Activated CD4-positive, alpha-beta T cell treated with anti-CD3 and anti-CD28 coated beads for 36 hours (primary cell): ENCODE measurements at regions of chr1 and their contacts with region 1.

Region 1: GRCh38 chr1:226121587-226122400 is 59.3 kb downstream of the H3-3A start:
- DNase-seq: peak; percentile 86
- ATAC-seq: peak; percentile 79
- H3K4me3 Mint-ChIP-seq: peak overlapping the region; percentile 68
- H3K27ac Mint-ChIP-seq: peak overlapping the region; percentile 60
- H3K4me1 Mint-ChIP-seq: peaks cover 20% of the 10 kb centered on the region
- H3K27me3 Mint-ChIP-seq: no peaks in the 10 kb centered on the region

Region 2: GRCh38 chr1:225962440-225962975 is 159.3 kb before region 1 on chr1:
- CTCF ChIA-PET with region 1: interaction called, 3 read pairs
- POLR2A ChIA-PET with region 1: no interaction called
- intact Hi-C with region 1: loop called in 1 of 2 experiments (anchors 1 kb)
- DNase-seq: peak; percentile 84
- ATAC-seq: peak; percentile 86
- H3K4me3 Mint-ChIP-seq: no peak overlapping the region
- H3K27ac Mint-ChIP-seq: no peak overlapping the region
- H3K4me1 Mint-ChIP-seq: peaks cover 2% of the 10 kb centered on the region
- H3K27me3 Mint-ChIP-seq: peaks cover 2% of the 10 kb centered on the region

Region 3: DNA sequence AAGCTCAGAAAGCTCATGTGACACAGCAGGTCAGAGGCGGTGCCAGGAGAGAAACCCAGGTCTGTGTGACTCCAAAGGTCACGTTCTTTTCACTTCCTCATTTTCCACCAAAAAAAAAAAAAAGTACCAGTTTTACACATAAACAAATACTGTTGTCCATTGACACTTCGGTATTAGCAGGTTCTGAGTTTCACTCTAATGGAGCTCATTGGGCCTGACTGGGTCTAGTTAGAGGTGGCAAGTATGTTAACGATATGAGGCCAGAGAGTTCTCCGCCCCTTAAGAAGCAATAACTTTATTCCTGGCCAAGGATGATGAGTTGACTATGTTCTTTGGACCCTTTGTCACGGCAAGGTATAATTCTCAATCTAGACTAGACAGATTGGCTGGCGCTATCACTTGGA is 92.7 kb before region 1 on chr1:
- CTCF ChIA-PET with region 1: no interaction called
- POLR2A ChIA-PET with region 1: no interaction called
- intact Hi-C with region 1: no loop called
- DNase-seq: no peak
- ATAC-seq: no peak
- H3K4me3 Mint-ChIP-seq: no peak overlapping the region
- H3K27ac Mint-ChIP-seq: no peak overlapping the region
- H3K4me1 Mint-ChIP-seq: no peaks in the 10 kb centered on the region
- H3K27me3 Mint-ChIP-seq: no peaks in the 10 kb centered on the region

Region 4: DNA sequence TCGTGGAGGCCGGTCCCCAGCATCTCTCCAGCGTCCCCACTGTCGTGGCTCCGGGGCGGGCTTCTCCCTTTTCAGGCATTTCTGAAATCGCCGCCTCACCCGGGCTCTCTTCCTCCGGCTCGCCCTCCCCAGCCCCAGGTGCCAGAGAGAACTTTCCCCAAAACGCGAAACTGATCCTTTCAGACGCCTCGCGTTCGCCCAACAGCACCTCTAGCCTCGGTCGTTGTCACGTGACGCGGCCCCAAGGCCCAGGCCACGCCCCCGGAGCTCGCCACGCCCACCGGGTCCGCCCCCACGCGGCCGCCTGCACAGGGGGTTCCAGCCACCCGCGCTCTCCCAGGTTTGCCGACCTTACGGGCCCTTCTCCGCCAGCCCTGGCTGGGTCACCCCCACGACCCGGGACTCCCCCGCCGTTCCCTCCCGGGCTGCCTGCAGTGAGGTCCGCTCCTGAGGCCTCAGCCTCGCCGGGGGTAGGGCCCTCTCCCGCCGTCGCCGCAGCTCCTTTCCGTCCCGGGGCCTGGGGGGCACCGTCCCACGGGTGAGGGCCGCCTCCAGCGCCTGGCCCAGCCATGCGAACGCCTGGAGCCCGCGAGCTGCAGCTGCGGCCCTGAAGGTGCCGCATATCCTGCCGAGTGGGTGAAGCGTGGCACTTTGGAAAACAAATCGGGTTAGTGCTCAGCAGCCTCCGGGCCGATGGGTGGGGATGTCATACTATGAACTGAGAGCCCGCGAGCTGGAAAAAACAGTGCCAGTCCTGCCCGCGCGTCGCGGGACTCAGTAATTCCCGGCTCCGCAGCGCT is 38.3 kb before region 1 on chr1:
- CTCF ChIA-PET with region 1: interaction called, 5 read pairs
- POLR2A ChIA-PET with region 1: interaction called, 3 read pairs
- intact Hi-C with region 1: loop called (anchors 1 to 5 kb)
- DNase-seq: peak; percentile 94
- ATAC-seq: peak; percentile 92
- H3K4me3 Mint-ChIP-seq: peak overlapping the region; percentile 75
- H3K27ac Mint-ChIP-seq: peak overlapping the region; percentile 65
- H3K4me1 Mint-ChIP-seq: peaks cover 9% of the 10 kb centered on the region
- H3K27me3 Mint-ChIP-seq: no peaks in the 10 kb centered on the region

Region 5: GRCh38 chr1:226186124-226187018 is 64.6 kb after region 1 on chr1 and contains the start of gene ACBD3:
- CTCF ChIA-PET with region 1: interaction called, 29 read pairs
- POLR2A ChIA-PET with region 1: no interaction called
- intact Hi-C with region 1: loop called (anchors 1 to 5 kb)
- DNase-seq: peak; percentile 91
- ATAC-seq: peak; percentile 97
- H3K4me3 Mint-ChIP-seq: peak within 1 kb of the TSS; percentile 91
- H3K27ac Mint-ChIP-seq: peak within 1 kb of the TSS; percentile 92
- H3K4me1 Mint-ChIP-seq: peaks cover 36% of the 10 kb centered on the region
- H3K27me3 Mint-ChIP-seq: no peaks in the 10 kb centered on the region
- total RNA-seq, gene ACBD3: 17.0 to 20.2 TPM

Region 6: DNA sequence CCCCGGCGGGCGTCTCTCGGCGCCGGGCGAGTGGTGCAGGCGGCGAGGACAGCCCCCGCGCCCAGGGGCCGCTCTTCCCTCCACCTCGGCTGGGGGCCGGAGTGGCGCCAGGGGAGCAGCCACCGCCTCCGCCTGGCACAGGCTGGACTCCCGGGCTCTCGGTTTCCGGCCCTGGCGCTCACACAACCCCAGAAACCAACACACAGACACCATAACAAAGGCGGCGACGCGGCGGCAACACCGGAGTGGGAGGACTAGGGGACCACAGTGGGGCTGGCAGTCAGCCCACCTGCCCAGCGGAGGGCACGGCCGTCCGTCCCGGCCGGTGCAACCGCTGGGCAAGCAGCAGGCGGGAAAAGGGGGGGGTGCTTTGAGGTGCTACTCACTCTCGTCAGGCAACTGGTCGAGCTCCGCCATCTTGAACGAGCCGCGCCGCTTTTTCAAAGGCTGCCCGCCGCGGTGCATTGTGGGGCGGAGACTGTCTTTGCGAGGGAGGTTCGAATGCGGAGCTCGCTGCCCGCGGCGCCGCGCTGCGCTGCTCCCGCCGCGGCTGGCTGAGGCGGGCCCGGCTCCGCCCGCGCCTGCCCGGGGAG is 187.0 kb after region 1 on chr1 and contains the start of gene LIN9:
- CTCF ChIA-PET with region 1: interaction called, 9 read pairs
- POLR2A ChIA-PET with region 1: no interaction called
- intact Hi-C with region 1: loop called in 1 of 2 experiments (anchors 1 kb)
- DNase-seq: peak; percentile 97
- ATAC-seq: peak; percentile 87
- H3K4me3 Mint-ChIP-seq: peak within 1 kb of the TSS; percentile 83
- H3K27ac Mint-ChIP-seq: peak within 1 kb of the TSS; percentile 86
- H3K4me1 Mint-ChIP-seq: peaks cover 15% of the 10 kb centered on the region
- H3K27me3 Mint-ChIP-seq: peaks cover 10% of the 10 kb centered on the region
- total RNA-seq, gene LIN9: 10.6 TPM

Region 7: GRCh38 chr1:226736908-226737818 is 615.4 kb after region 1 on chr1:
- CTCF ChIA-PET with region 1: no interaction called
- POLR2A ChIA-PET with region 1: no interaction called
- intact Hi-C with region 1: loop called in 1 of 2 experiments (anchors 5 kb)
- DNase-seq: peak; percentile 79
- ATAC-seq: peak; percentile 46
- H3K4me3 Mint-ChIP-seq: peak overlapping the region; percentile 88
- H3K27ac Mint-ChIP-seq: peak overlapping the region; percentile 85
- H3K4me1 Mint-ChIP-seq: peaks cover 42% of the 10 kb centered on the region
- H3K27me3 Mint-ChIP-seq: no peaks in the 10 kb centered on the region